Activated B cell treated with CpG ODN at 0.5 μM for 24 hours (primary cell): ENCODE measurements at regions of chr10 and their contacts with region 1.

Region 1: DNA sequence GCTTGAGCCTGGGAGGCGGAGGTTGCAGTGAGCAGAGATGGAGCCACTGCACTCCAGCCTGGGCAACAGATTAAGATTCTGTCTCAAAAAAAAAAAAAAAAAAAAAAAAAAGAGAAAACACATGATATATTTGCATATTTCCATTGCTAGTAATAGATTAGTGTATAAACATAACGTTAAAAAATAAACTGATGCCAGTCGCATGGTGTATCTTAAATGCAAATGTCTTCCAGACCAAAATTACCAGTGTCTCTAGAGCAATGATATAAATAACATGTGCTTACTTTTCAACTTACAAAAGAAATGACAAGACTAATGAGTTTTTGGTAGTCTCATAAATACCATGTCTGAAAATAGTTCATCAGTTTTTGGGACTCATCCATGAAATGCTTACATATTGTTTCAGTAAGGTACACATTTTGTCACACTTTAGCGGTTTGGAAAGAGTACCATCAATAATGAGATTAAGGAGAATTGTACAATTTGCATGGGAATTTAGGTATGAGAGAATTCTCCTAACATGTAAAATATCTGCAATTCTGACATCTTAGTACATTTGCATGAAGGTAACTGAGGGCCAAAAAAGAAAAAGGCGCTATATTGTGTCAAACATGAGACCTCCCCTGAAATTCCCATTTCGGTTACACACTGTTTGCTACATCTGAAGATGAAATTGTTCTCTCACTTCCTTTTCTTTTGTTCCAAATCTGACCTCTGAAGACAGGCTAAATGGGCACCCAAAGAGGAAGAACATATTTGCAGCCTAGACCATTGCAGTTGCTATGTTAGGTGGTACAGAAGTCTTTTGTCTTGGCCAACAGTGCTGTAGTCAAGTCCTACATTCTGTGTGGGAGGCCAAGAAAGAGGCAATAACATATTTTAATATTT is 51.5 kb upstream of the PIP4K2A start:
- DNase-seq: no peak
- ATAC-seq: peak; percentile 68
- H3K4me3 Mint-ChIP-seq: peak overlapping the region; percentile 51
- H3K27ac Mint-ChIP-seq: peak overlapping the region; percentile 61
- H3K4me1 Mint-ChIP-seq: peaks cover 48% of the 10 kb centered on the region
- H3K27me3 Mint-ChIP-seq: no peaks in the 10 kb centered on the region
- CTCF ChIP-seq: no peak

Region 2: GRCh38 chr10:22742678-22743077 is 23.2 kb before region 1 on chr10:
- CTCF ChIA-PET with region 1: interaction called, 6 read pairs
- POLR2A ChIA-PET with region 1: no interaction called
- intact Hi-C with region 1: loop called (anchors 2 kb)
- DNase-seq: no peak
- ATAC-seq: peak; percentile 100
- H3K4me3 Mint-ChIP-seq: peak overlapping the region; percentile 8
- H3K27ac Mint-ChIP-seq: peak overlapping the region; percentile 54
- H3K4me1 Mint-ChIP-seq: peaks cover 23% of the 10 kb centered on the region
- H3K27me3 Mint-ChIP-seq: no peaks in the 10 kb centered on the region
- CTCF ChIP-seq: no peak

Region 3: DNA sequence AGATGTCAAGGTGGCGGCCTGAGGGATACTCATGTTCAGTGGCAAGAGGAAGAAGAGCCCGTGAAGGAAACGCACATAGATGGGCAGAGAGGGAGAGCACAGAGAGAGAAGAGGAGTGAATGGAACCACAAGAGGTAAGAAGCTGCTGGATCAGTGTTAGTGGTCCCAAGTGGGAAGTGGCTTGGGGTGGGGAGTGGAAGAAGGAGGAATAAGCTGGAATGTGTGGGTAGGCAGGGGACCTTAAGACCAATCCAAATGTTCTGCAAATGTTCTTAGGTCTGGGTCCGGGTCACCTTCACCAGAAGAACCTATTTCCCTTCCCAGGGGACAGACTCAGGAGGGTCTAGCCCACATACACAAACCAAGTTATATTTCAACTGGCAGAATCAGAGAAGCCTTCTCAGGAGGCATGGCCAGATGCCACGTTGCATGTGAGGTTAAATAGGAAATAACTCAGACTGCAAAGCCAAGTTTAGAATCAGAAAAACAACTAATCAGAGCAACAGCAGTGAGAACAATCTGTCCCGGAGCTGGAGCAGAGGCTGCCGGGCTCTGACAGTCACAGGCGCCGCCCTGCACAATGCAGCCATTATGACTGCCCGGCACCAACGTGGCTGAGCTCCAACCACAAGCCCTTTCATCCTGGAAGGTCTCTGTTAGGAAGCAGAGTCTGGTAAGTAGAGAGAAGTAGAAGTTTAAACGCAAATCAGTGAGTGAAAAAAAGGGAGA is 83.3 kb after region 1 on chr10:
- CTCF ChIA-PET with region 1: no interaction called
- POLR2A ChIA-PET with region 1: no interaction called
- intact Hi-C with region 1: no loop called
- DNase-seq: no peak
- ATAC-seq: no peak
- H3K4me3 Mint-ChIP-seq: no peak overlapping the region
- H3K27ac Mint-ChIP-seq: no peak overlapping the region
- H3K4me1 Mint-ChIP-seq: peaks cover 11% of the 10 kb centered on the region
- H3K27me3 Mint-ChIP-seq: no peaks in the 10 kb centered on the region
- CTCF ChIP-seq: no peak

Region 4: DNA sequence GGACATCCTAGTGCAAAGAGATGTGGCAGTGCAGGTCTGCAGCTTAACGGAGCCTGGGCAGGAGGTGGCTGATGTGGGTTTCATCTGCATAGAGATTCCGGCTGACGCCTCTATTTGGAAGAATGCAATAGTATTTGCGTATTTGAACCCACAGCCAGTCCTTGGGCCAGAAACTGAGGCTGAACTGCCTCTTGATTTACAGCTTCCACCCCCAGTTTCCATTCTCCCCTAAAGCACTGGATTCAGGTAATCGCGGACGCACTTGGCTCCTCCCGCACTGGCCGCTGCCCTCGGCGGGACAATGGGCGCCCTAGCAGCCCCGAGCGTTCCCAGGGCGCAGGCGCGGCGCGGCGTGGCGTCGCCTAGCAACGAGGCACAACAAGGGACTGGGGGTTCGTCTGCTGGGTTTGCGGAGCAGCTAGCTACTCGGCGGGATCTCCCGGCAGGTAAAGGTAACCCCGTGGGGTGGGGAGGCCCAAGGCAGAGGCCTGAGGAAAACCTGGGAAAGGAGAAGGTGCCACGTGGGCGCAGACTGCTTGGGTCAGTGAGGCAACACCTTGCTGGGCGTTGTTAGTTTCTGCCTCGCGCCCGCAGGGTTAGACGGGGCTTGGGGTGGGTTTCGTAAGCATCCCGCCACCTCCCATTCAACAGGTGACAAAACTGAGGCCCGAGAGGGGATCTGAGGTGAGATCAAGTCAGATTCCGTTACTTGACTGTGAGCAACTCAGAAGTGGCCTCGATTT is 161.9 kb after region 1 on chr10 and contains the start of gene ARMC3:
- CTCF ChIA-PET with region 1: no interaction called
- POLR2A ChIA-PET with region 1: no interaction called
- intact Hi-C with region 1: loop called (anchors 5 kb)
- DNase-seq: peak; percentile 54
- ATAC-seq: peak; percentile 85
- H3K4me3 Mint-ChIP-seq: no peak within 1 kb of the TSS
- H3K27ac Mint-ChIP-seq: peak within 1 kb of the TSS; percentile 13
- H3K4me1 Mint-ChIP-seq: peaks cover 17% of the 10 kb centered on the region
- H3K27me3 Mint-ChIP-seq: peaks cover 6% of the 10 kb centered on the region
- CTCF ChIP-seq: no peak
- total RNA-seq, gene ARMC3: not detected in 2 replicates